Heart left ventricle (tissue), 16 donors: ENCODE measurements at regions of chr11 and their contacts with region 1.

Region 1: DNA sequence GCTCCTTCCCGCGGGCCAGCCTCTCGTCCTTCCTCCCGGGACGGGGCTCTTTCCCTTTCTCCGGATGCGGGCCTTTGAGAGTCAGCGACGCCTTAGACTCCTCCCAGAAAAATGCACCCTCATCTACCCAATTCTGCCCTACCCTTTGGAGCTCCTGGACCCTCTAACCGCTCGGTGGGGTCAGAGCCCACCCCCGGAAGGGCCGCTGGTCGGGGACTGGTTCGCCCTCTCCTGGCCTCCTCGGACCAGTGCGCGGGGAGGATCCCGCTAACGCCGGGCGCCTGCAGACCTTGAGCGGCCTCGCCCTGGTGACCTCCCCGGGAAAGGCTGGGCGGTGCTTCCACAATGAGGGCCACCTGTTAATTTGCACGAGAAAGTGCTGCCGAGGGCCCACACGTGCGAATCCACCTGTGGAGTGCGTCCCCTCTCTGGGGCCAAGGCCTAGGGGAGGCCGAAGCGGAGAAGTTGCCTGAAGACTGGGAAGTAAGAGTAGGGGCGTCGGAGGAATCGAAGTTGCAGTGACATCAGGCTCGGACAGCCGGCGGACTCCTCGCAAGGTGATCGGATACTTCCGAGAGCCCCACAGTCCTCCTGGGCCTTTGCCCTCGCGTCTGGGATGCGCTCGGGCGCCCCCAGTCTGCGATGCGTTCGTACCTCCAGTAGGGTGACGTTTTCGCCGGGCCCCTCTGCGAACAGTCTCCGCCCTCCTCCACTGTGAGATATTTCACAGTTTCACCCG is 61.5 kb downstream of the ENDOD1 start:
- DNase-seq: peak; percentile 92 to 94 (median 93)
- ATAC-seq: peak; percentile 90 to 94 (median 92)
- H3K4me3 ChIP-seq: peak overlapping the region; percentile 38 to 92 (median 64)
- H3K27ac ChIP-seq: peak overlapping the region; percentile 80 to 99 (median 92)
- H3K4me1 ChIP-seq: peaks cover 0 to 50% (median 17%) of the 10 kb centered on the region in 12 donors
- H3K27me3 ChIP-seq: no peaks in the 10 kb centered on the region
- CTCF ChIP-seq: peak; percentile 69 to 92 (median 82)
- POLR2A ChIP-seq: peak in 1 of 2 donors; percentile 71

Region 2: DNA sequence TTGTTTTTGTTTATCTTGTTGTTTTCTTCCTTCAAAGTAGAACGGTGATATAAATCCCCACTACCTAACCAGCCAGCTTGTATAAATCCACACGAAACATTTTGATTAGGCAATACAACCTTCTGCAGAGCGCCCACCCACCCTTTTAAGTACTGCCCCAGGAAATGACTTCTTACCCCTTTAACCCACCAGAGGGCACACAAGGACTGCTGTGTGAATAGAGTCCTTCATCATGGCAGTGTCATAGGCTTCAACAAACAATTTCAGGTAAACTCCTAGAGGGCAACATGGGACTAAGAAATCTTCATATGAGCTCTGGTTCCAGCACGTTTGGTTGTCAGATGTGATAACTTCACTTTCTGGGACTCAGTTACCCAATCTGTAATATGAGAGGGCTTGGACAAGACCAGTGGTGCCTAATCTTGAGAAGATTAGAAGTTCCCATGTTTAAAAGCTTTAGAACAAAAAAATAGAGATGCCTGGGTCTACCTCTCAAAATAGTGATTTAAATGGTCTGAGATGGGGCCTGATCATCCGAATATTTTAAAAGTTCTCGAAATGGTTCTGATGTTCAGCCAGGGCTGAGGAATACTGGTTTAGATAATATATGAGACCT is 527.9 kb before region 1 on chr11:
- intact Hi-C with region 1: loop called in 4 of 10 experiments (anchors 5 to 10 kb)
- DNase-seq: peak in 4 of 5 donors; percentile 40 to 46 (median 44)
- ATAC-seq: peak; percentile 80 to 98 (median 95)
- H3K4me3 ChIP-seq: no peak overlapping the region
- H3K27ac ChIP-seq: no peak overlapping the region
- H3K4me1 ChIP-seq: peaks cover 0 to 5% (median 0%) of the 10 kb centered on the region in 12 donors
- H3K27me3 ChIP-seq: no peaks in the 10 kb centered on the region
- CTCF ChIP-seq: peak; percentile 56 to 94 (median 84)
- POLR2A ChIP-seq: no peak

Region 3: DNA sequence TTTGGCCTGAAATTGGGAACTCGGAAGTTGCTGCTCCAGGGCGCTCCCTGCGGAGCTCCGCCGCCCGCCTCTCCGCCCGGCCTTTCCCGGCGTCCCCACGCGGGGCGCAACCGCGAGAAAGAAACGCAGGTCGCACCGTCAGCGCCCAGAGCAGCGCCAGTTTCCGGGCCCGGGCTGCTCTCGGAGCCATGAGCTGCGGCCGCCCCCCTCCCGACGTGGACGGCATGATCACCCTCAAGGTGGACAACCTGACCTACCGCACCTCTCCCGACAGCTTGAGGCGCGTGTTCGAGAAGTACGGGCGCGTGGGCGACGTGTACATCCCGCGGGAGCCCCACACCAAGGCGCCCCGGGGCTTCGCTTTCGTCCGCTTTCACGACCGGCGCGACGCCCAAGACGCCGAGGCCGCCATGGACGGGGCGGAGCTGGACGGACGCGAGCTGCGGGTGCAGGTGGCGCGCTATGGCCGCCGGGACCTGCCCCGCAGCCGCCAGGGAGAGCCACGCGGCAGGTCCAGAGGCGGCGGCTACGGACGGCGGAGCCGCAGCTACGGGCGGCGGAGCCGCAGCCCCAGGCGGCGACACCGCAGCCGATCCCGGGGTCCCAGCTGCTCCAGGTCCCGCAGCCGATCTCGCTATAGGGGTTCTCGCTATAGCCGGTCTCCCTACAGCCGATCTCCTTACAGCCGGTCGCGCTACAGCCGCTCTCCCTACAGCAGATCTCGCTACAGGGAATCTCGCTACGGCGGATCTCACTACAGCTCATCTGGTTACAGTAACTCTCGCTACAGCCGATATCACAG is 83.9 kb before region 1 on chr11:
- intact Hi-C with region 1: loop called in 9 of 10 experiments (anchors 1 to 5 kb)
- DNase-seq: peak; percentile 85 to 93 (median 89)
- ATAC-seq: peak; percentile 65 to 91 (median 86)
- H3K4me3 ChIP-seq: peak overlapping the region; percentile 62 to 92 (median 78)
- H3K27ac ChIP-seq: peak overlapping the region; percentile 93 to 99 (median 96)
- H3K4me1 ChIP-seq: peaks cover 3 to 24% (median 13%) of the 10 kb centered on the region in 12 donors
- H3K27me3 ChIP-seq: no peaks in the 10 kb centered on the region
- CTCF ChIP-seq: peak; percentile 35 to 83 (median 62)
- POLR2A ChIP-seq: peak in 1 of 2 donors; percentile 49

Region 4: GRCh38 chr11:95095858-95096587 is 55.1 kb before region 1 on chr11:
- intact Hi-C with region 1: loop called in 3 of 10 experiments (anchors 5 kb)
- DNase-seq: no peak
- ATAC-seq: peak in 3 of 4 donors; percentile 60 to 75 (median 60)
- H3K4me3 ChIP-seq: peak overlapping the region in 1 of 12 donors; percentile 18
- H3K27ac ChIP-seq: peak overlapping the region in 3 of 12 donors; percentile 2 to 76 (median 26)
- H3K4me1 ChIP-seq: peaks cover 0 to 48% (median 18%) of the 10 kb centered on the region in 12 donors
- H3K27me3 ChIP-seq: no peaks in the 10 kb centered on the region
- CTCF ChIP-seq: no peak
- POLR2A ChIP-seq: no peak

Region 5: DNA sequence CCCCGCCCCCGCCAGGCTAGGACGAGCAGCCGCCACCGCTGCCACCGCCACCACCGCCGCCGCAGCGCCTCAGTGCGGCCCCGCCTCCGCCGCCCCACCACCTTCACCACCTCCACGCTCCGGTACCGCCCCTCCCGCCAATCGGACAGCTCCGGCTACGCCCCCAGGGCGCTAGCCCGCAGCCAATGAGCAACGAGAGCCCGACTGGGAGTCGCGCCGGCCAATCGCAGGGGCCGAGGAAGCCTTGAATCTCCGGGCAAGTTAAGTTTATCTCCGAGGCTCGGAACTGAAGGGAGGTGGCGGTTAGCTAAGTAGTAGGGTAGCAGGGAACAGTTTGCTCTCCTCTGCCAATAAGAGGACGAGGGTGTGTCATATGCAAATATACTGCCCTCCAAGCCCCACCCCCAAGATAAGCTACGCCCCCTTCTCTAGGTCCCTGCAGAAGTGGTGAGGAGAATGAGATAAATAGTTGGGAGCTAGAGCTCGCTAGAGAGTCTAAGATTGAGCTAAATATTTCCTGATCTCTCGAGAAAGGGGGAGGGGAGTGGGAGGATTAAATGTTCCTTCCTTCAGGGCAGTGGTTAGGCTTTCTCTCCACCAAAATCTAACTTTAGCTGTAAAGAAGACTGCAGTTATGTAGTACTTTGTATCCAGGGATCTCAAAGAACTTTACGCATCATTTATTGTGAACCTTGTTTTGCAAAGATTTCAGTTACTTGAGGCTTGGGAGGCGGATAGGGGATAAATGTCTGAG is 80.2 kb after region 1 on chr11 and contains the start of gene SESN3:
- intact Hi-C with region 1: loop called in 3 of 10 experiments (anchors 2 to 5 kb)
- DNase-seq: peak; percentile 99
- ATAC-seq: peak; percentile 98 to 99 (median 98)
- H3K4me3 ChIP-seq: peak within 1 kb of the TSS; percentile 78 to 95 (median 88)
- H3K27ac ChIP-seq: peak within 1 kb of the TSS; percentile 36 to 90 (median 81)
- H3K4me1 ChIP-seq: peaks cover 0 to 48% (median 9%) of the 10 kb centered on the region in 12 donors
- H3K27me3 ChIP-seq: no peaks in the 10 kb centered on the region
- CTCF ChIP-seq: peak in 5 of 12 donors; percentile 15 to 43 (median 39)
- POLR2A ChIP-seq: peak in 1 of 2 donors; percentile 78
- total RNA-seq, gene SESN3: 3.1 to 26.5 (median 5.8) TPM

Region 6: GRCh38 chr11:95577716-95578460 is 426.8 kb after region 1 on chr11:
- intact Hi-C with region 1: loop called in 1 of 10 experiments (anchors 10 kb)
- DNase-seq: no peak
- ATAC-seq: peak in 2 of 4 donors; percentile 48 to 80
- H3K4me3 ChIP-seq: no peak overlapping the region
- H3K27ac ChIP-seq: no peak overlapping the region
- H3K4me1 ChIP-seq: peaks cover 0 to 25% (median 0%) of the 10 kb centered on the region in 12 donors
- H3K27me3 ChIP-seq: no peaks in the 10 kb centered on the region
- CTCF ChIP-seq: peak in 3 of 12 donors; percentile 2 to 20 (median 17)
- POLR2A ChIP-seq: no peak

Region 7: DNA sequence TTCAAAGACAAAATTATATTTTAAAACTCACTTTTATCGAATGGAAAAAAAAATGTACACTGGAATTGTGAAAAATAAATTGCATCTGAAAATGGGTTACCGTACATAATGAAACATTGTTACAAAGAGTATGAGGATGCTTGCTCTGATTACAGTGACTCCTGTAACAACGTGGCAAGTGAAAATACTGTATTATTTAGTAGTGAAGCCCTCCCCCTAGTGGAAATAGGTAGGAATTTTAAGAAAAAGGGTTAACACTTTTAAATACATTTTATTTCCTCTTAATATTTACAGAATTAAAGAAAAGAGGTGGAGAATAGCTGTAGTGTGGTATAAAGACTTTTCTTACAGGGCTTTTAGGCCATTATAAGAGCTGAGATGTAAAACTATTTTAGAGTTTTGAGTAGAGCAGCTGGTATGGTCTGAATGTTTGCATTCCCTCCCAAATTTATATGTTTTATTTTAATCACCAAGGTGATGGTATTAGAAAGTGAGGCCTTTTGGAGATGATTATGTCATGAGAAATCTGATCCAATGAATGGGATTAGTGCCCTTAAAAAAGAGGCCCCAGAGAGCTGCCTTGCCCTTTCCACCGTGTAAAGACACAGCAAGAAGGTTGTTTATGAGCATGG is 613.3 kb after region 1 on chr11:
- intact Hi-C with region 1: loop called (anchors 1 to 5 kb)
- DNase-seq: no peak
- ATAC-seq: peak in 3 of 4 donors; percentile 61 to 69 (median 62)
- H3K4me3 ChIP-seq: no peak overlapping the region
- H3K27ac ChIP-seq: no peak overlapping the region
- H3K4me1 ChIP-seq: peaks cover 0 to 16% (median 0%) of the 10 kb centered on the region in 12 donors
- H3K27me3 ChIP-seq: no peaks in the 10 kb centered on the region
- CTCF ChIP-seq: peak; percentile 56 to 85 (median 71)
- POLR2A ChIP-seq: no peak